ENCODE measurements at regions of chrX and their contacts with region 1.

Region 1: DNA sequence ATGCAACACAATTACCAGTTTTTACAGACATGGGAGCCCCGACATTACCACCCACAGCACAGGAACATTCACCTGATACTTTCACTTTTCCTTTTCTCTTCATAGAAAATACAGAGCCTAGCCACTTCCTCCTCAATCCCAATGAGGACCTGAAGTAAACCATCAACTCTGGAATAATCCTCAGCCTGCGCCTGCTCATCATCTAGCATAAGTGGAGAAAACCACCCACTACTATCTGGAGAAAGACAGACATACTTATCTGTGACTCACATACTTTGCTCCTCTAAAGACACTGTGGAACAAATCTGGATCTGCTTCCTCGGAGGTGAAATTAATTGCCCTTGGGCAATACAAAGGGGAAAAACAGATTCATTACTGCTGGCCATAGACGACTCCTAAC is 47.8 kb downstream of the ZCCHC13 start:
- DNase-seq: peak; percentile 19
- H3K4me3 ChIP-seq: no peak overlapping the region
- H3K27ac ChIP-seq: no peak overlapping the region
- H3K4me1 ChIP-seq: no peaks in the 10 kb centered on the region
- H3K27me3 ChIP-seq: no peaks in the 10 kb centered on the region
- CTCF ChIP-seq: no peak

Region 2: DNA sequence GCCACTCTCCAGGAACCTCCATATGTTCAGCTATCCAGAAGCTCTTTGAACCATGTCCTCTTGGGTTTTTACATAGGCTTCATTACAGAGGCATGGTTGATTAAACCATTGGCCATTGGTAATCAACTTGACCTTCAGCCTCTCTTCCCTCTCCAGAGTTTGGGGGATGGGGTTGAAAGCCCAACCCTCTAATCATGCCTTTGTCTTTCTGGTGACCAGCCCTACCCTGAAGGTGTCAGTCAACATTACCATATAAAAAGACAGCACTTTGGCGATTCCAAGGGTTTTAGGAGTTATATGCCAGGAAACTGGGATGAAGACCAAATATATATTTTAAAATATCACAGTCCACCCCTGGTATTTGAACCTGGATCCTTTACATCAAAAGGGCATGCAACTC is 566.3 kb before region 1 on chrX:
- CTCF ChIA-PET with region 1: no interaction called
- dilution Hi-C with region 1: no loop called
- in situ Hi-C with region 1: no loop called
- intact Hi-C with region 1: no loop called
- DNase-seq: no peak
- H3K4me3 ChIP-seq: no peak overlapping the region
- H3K27ac ChIP-seq: no peak overlapping the region
- H3K4me1 ChIP-seq: no peaks in the 10 kb centered on the region
- H3K27me3 ChIP-seq: peaks cover under 1% of the 10 kb centered on the region
- CTCF ChIP-seq: no peak

Region 3: DNA sequence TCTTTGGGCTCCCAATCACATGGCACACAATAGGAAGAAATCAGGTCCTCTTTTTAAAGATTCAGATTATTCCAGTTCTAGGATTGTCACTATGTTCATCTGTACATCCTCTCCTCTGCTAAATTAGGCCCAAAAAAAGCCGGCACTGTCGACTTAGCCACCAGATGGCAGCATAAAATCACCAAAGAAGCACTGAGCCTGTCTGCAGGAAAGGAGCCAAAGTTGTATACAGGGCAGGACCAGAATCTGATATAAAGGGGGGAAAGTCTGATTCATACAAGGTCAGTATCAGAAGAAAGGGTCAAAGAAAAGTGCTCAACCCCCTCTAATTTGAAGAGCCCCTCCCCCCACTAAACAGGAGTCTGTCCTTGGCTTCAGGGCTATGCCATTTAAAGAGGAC is 496.2 kb before region 1 on chrX:
- CTCF ChIA-PET with region 1: no interaction called
- dilution Hi-C with region 1: no loop called
- in situ Hi-C with region 1: loop called (anchors 10 to 25 kb)
- intact Hi-C with region 1: no loop called
- DNase-seq: peak; percentile 60
- H3K4me3 ChIP-seq: no peak overlapping the region
- H3K27ac ChIP-seq: no peak overlapping the region
- H3K4me1 ChIP-seq: no peaks in the 10 kb centered on the region
- H3K27me3 ChIP-seq: no peaks in the 10 kb centered on the region
- CTCF ChIP-seq: peak; percentile 85 to 88

Region 4: DNA sequence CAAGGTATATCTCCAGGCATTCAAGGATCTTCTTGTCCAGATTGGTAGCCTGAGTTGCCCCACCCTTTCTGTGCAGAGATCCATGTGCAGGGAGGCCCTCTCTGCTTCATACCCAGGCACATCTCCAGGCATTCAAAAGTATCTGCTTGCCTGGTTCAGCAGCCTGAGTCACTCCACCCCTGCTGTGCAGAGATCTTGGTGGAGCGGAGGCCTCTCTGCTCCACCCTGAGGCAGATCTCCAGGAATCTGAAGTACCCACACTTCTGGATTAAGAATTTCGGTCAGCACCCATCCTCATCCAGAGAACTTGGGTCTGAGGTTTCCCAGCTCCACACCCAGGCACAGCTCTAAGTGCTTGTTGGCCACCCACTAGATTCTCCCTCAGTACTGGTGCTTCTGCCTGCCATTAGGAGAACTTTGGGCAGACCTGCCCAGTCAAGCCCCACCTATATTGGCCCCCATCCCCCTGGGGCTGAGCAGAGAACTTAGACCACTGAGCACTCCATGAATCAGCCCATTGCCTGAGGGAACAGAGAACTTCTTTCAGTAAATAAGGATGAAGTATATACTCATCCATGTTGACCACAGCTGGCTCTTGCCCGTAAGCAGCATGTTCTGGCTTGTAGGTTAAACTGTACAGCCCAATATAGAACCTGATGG is 247.3 kb before region 1 on chrX:
- CTCF ChIA-PET with region 1: no interaction called
- dilution Hi-C with region 1: no loop called
- in situ Hi-C with region 1: no loop called
- intact Hi-C with region 1: no loop called
- DNase-seq: peak; percentile 89
- H3K4me3 ChIP-seq: no peak overlapping the region
- H3K27ac ChIP-seq: no peak overlapping the region
- H3K4me1 ChIP-seq: peaks cover 9% of the 10 kb centered on the region
- H3K27me3 ChIP-seq: peaks cover 3% of the 10 kb centered on the region
- CTCF ChIP-seq: no peak